Activated CD8-positive, alpha-beta T cell treated with anti-CD3 and anti-CD28 coated beads, Interleukin-2, amount 10 ng/mL, durations not matched to agents 7 days and 5 days (primary cell): ENCODE measurements at regions of chr3 and their contacts with region 1.

Region 1: DNA sequence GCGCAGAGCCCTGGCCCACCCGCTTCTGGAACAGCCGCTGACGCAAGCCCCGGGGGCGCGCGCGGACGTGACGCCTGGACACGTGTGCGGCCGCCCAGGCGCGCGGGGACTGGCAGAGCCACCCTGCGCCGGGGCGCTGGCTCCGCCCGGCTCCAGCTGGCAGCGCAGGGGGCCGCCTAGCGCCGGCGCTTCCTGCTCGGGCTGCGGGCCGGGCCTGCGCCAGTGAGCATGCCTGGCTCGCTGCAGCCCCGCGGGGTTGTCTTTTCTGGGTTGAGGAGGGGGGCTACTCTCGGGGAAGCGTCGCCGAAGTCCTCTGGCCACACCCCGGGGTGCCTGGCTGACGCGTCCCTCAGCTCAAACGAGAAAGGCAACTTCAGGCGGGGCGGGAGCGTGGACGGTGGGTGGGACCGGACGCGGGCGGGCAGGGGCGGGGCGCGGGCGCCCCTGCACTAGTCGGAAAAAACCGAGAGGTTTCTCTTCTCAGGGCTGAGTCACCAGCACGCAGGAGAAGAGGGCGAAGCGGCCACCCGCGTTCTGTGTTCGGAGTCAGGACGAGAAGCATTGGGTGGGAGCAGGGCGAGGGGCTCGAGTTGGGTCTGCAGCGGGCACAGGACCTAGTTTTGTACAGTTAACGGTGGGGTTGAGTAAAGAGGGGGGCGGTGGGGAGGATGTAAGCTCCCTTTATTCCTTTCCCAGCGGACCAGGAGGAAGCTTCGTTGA is at the start of gene SIAH2:
- DNase-seq: peak; percentile 94
- ATAC-seq: peak; percentile 85
- H3K4me3 Mint-ChIP-seq: peak within 1 kb of the TSS; percentile 92
- H3K27ac Mint-ChIP-seq: peak within 1 kb of the TSS; percentile 100
- H3K4me1 Mint-ChIP-seq: peaks cover 46% of the 10 kb centered on the region
- H3K27me3 Mint-ChIP-seq: no peaks in the 10 kb centered on the region
- total RNA-seq, gene SIAH2: 31.5 to 32.3 TPM

Region 2: DNA sequence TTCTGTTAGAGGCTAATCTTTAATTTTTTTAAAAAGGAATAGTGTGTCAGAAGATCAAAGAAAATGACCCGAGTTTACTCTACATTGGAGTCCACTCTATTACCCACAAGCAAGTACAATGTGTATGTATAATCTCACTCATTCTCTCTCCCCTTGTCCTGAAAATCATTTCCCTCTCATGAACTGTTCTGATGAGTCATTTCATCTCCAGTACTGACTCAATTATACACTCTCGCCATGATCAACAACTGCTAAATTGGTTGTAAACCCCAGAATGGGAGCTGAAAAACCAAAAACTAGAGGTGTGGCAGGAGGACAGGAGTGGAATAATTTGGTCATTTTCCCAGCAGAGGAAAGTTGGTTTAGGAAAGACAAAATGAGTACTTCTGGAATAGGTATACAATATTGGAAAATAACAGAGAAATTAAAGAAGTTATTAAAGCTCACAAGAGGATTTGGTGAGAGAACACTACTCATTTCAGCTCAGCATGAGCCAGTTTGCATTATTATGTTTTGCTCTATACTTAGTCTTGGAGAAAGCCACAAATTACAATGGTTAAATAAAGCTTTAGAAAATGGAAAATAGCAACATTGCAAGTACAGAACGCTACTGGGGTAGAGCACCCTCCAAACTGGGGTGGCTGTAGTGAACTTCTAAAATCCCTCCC is 648.3 kb before region 1 on chr3:
- CTCF ChIA-PET with region 1: no interaction called
- POLR2A ChIA-PET with region 1: no interaction called
- DNase-seq: no peak
- ATAC-seq: no peak
- H3K4me3 Mint-ChIP-seq: no peak overlapping the region
- H3K27ac Mint-ChIP-seq: no peak overlapping the region
- H3K4me1 Mint-ChIP-seq: no peaks in the 10 kb centered on the region
- H3K27me3 Mint-ChIP-seq: peaks cover 20% of the 10 kb centered on the region

Region 3: GRCh38 chr3:150408221-150409102 is 354.8 kb before region 1 on chr3 and contains the start of gene TSC22D2:
- CTCF ChIA-PET with region 1: interaction called, 3 read pairs
- POLR2A ChIA-PET with region 1: interaction called, 36 read pairs
- DNase-seq: peak; percentile 93
- ATAC-seq: peak; percentile 69
- H3K4me3 Mint-ChIP-seq: peak within 1 kb of the TSS; percentile 92
- H3K27ac Mint-ChIP-seq: peak within 1 kb of the TSS; percentile 86
- H3K4me1 Mint-ChIP-seq: peaks cover 29% of the 10 kb centered on the region
- H3K27me3 Mint-ChIP-seq: peaks cover 3% of the 10 kb centered on the region
- total RNA-seq, gene TSC22D2: 8.6 to 8.9 TPM

Region 4: DNA sequence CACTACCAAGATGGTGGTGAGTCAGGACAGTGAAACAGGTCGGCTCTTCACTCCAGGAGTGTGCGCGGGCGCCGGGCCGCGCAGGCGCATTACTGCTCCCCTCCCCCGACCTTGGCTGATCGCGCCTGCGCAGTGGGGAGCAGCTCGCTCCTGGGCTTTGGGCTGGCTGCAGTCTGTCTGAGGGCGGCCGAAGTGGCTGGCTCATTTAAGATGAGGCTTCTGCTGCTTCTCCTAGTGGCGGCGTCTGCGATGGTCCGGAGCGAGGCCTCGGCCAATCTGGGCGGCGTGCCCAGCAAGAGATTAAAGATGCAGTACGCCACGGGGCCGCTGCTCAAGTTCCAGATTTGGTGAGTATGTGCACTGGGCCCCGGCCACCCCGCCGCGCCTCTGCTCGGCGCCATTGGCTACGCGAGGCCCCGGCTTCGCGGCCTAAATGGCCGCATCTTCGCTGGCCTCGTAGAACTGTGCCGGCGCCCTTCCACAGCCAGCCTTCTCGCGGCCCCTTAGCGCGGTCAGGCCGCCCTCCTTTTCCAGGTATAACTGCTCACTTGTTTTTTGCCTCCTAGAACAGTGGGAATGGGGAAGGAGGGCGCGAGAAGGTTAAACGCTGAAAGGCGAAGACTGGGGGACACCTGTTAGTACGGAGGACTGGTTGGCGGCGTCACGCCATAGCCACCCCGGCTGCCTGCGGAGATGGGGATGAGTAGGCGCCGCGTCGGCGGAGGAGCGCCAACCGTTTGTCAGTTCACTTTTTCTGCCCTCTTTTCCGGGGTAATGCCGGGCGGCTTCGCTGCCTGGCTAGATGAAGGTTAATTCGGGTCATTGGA is 159.9 kb before region 1 on chr3 and contains the start of gene SELENOT:
- CTCF ChIA-PET with region 1: interaction called, 5 read pairs
- POLR2A ChIA-PET with region 1: interaction called, 43 read pairs
- DNase-seq: peak; percentile 95
- ATAC-seq: peak; percentile 92
- H3K4me3 Mint-ChIP-seq: peak within 1 kb of the TSS; percentile 92
- H3K27ac Mint-ChIP-seq: peak within 1 kb of the TSS; percentile 99
- H3K4me1 Mint-ChIP-seq: peaks cover 66% of the 10 kb centered on the region
- H3K27me3 Mint-ChIP-seq: no peaks in the 10 kb centered on the region
- total RNA-seq, gene SELENOT: 99.8 to 104 TPM

Region 5: DNA sequence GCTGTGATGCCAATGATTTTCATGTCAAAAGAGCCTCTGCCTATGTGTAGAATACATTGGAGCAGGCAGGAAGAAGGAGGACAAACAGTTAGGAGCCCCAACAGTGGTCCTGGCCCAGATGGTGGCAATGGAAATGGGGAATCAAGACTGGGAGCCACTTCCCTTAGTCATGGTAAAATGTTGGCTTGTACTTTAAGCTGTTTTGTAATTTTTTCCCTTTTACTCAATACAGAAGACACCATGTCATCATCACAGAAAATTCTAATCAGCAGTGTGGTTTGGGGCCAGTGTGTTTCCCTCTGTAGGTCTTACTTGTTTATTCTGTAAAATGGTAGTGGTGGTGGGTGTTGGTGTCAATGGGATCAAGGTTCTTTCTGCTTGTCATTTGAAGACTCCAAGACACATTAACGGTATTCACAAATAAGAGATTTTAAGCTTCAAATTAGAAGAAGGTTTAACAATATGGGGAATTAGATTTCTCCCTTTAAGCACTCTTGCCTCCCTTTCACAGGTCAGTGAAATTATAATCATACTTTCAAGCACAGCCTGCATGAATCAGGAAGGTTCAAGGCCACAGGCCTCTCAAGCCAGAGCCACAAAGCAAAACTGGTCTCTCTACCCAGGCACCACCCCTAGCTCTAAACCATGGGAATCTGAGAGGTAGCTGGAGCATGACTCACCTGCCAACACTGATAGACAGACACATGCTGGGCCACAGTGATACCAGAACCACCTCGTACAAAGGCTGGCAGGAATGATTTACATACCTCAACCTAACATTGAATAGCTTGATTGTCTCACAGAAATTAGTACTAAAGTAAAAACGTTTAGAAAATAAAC is 25.2 kb before region 1 on chr3:
- CTCF ChIA-PET with region 1: interaction called, 7 read pairs
- POLR2A ChIA-PET with region 1: interaction called, 61 read pairs
- DNase-seq: no peak
- ATAC-seq: peak; percentile 43
- H3K4me3 Mint-ChIP-seq: no peak overlapping the region
- H3K27ac Mint-ChIP-seq: no peak overlapping the region
- H3K4me1 Mint-ChIP-seq: peaks cover 45% of the 10 kb centered on the region
- H3K27me3 Mint-ChIP-seq: no peaks in the 10 kb centered on the region

Region 6: GRCh38 chr3:150775091-150775501 is 11.8 kb after region 1 on chr3:
- CTCF ChIA-PET with region 1: interaction called, 12 read pairs
- POLR2A ChIA-PET with region 1: interaction called, 20 read pairs
- DNase-seq: no peak
- ATAC-seq: no peak
- H3K4me3 Mint-ChIP-seq: no peak overlapping the region
- H3K27ac Mint-ChIP-seq: no peak overlapping the region
- H3K4me1 Mint-ChIP-seq: no peaks in the 10 kb centered on the region
- H3K27me3 Mint-ChIP-seq: no peaks in the 10 kb centered on the region

Region 7: GRCh38 chr3:151203051-151203420 is 439.8 kb after region 1 on chr3 and contains the start of gene GPR171:
- CTCF ChIA-PET with region 1: interaction called, 3 read pairs
- POLR2A ChIA-PET with region 1: interaction called, 34 read pairs
- DNase-seq: peak; percentile 85
- ATAC-seq: peak; percentile 73
- H3K4me3 Mint-ChIP-seq: peak within 1 kb of the TSS; percentile 87
- H3K27ac Mint-ChIP-seq: peak within 1 kb of the TSS; percentile 94
- H3K4me1 Mint-ChIP-seq: peaks cover 59% of the 10 kb centered on the region
- H3K27me3 Mint-ChIP-seq: no peaks in the 10 kb centered on the region
- total RNA-seq, gene GPR171: 115 to 124 TPM